Common myeloid progenitor, CD34-positive (primary cell): ENCODE measurements at regions of chr3 and their contacts with region 1.

Region 1: GRCh38 chr3:10303785-10304184 is 11.0 kb upstream of the GHRL start:
- DNase-seq: no peak
- H3K4me3 ChIP-seq: no peak overlapping the region
- H3K27ac ChIP-seq: no peak overlapping the region
- H3K4me1 ChIP-seq: peaks cover 0 to 11% (median 7%) of the 10 kb centered on the region in 4 experiments
- H3K27me3 ChIP-seq: no peaks in the 10 kb centered on the region

Region 2: GRCh38 chr3:10315771-10316344 is 12.1 kb after region 1 on chr3:
- CTCF ChIA-PET with region 1: interaction called, 17 read pairs
- POLR2A ChIA-PET with region 1: no interaction called
- DNase-seq: no peak
- H3K4me3 ChIP-seq: no peak overlapping the region
- H3K27ac ChIP-seq: no peak overlapping the region
- H3K4me1 ChIP-seq: peaks cover 7 to 15% (median 10%) of the 10 kb centered on the region in 4 experiments
- H3K27me3 ChIP-seq: no peaks in the 10 kb centered on the region

Region 3: GRCh38 chr3:11168881-11169805 is 865.4 kb after region 1 on chr3:
- CTCF ChIA-PET with region 1: no interaction called
- POLR2A ChIA-PET with region 1: no interaction called
- DNase-seq: no peak
- H3K4me3 ChIP-seq: no peak overlapping the region
- H3K27ac ChIP-seq: no peak overlapping the region
- H3K4me1 ChIP-seq: peaks cover 0 to 16% (median 12%) of the 10 kb centered on the region in 4 experiments
- H3K27me3 ChIP-seq: no peaks in the 10 kb centered on the region